MCF 10A (cell line): ENCODE measurements at regions of chr5 and their contacts with region 1.

Region 1: GRCh38 chr5:36870399-36871040 is 6.0 kb upstream of the NIPBL start:
- DNase-seq: peak; percentile 75
- H3K4me3 Mint-ChIP-seq: no peak overlapping the region
- H3K27ac Mint-ChIP-seq: no peak overlapping the region
- H3K4me1 Mint-ChIP-seq: peaks cover 20% of the 10 kb centered on the region
- H3K27me3 Mint-ChIP-seq: no peaks in the 10 kb centered on the region
- CTCF ChIP-seq: peak; percentile 65

Region 2: GRCh38 chr5:36734422-36734821 is 136.1 kb before region 1 on chr5:
- CTCF ChIA-PET with region 1: interaction called, 57 read pairs
- POLR2A ChIA-PET with region 1: interaction called, 5 read pairs
- intact Hi-C with region 1: no loop called
- DNase-seq: peak; percentile 57
- H3K4me3 Mint-ChIP-seq: no peak overlapping the region
- H3K27ac Mint-ChIP-seq: no peak overlapping the region
- H3K4me1 Mint-ChIP-seq: no peaks in the 10 kb centered on the region
- H3K27me3 Mint-ChIP-seq: peaks cover 19% of the 10 kb centered on the region
- CTCF ChIP-seq: peak; percentile 29

Region 3: DNA sequence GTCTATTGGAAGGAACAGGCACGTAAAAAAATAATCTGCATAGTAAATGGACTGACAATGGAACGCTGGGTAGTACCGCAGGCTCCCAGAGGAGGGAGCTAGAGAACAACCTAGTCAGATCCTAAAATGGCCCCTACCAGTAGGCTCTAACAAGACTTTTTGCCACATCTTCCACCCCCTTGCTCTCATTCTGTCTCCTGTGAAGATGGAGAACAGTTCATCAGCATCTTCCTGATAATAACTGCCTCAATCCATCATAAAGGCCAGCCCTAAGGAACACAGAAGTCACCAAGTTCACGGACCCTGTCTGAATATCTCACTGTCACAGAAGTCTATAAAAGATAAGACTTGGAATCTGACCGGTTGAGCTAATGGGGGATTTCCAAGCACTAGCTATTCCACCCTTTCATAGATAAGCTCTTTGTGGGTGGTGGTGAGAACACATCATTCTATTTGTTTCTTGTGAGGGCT is 130.7 kb before region 1 on chr5:
- CTCF ChIA-PET with region 1: interaction called, 48 read pairs
- POLR2A ChIA-PET with region 1: interaction called, 50 read pairs
- intact Hi-C with region 1: loop called (anchors 1 kb)
- DNase-seq: peak; percentile 77
- H3K4me3 Mint-ChIP-seq: no peak overlapping the region
- H3K27ac Mint-ChIP-seq: no peak overlapping the region
- H3K4me1 Mint-ChIP-seq: peaks cover 8% of the 10 kb centered on the region
- H3K27me3 Mint-ChIP-seq: peaks cover 15% of the 10 kb centered on the region
- CTCF ChIP-seq: peak; percentile 87

Region 4: DNA sequence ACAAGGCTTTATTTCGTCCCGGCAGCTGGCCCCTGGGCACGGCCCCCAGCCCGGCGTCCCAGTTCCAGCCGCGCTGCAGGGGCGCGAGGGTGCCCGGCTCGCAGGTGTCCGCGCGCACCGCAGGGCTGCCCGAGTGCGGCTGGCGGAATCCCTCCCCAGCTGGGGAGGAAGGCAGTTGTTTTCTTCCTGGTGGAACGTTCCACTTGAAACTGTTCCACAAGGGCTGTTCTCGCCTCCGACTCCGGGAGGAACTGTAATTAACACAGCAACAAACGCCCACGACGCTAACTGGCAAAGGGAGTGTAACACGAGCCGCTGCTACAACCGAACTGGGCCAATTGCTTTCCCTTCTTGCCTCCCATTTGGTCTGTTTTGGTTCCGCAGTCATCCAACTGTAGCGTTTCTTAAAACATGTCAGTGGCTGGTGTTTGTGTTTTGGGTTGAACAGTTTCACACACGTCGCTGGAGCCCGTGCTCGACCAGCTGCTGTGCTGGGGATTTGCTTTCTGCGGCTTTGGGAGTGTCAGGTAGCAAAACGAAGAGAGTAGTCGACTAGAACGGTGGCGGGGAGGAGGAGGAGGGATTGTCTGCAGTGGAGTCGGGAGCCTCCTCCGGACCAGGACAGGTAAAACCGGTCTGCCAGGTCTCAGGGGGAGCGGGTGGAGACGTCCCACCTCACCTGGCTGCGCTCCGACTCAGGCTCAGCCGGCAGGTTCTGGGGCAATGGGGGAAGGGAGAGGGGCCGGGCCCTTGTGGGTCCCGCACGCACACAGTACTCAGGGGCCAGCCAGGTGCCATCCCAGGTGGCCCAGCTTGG is 125.5 kb before region 1 on chr5:
- CTCF ChIA-PET with region 1: interaction called, 48 read pairs
- POLR2A ChIA-PET with region 1: interaction called, 50 read pairs
- intact Hi-C with region 1: loop called (anchors 1 kb)
- DNase-seq: peak; percentile 72
- H3K4me3 Mint-ChIP-seq: peak overlapping the region; percentile 85
- H3K27ac Mint-ChIP-seq: peak overlapping the region; percentile 32
- H3K4me1 Mint-ChIP-seq: peaks cover 17% of the 10 kb centered on the region
- H3K27me3 Mint-ChIP-seq: peaks cover 28% of the 10 kb centered on the region
- CTCF ChIP-seq: no peak

Region 5: GRCh38 chr5:37005946-37006540 is 135.5 kb after region 1 on chr5:
- CTCF ChIA-PET with region 1: interaction called, 4 read pairs
- POLR2A ChIA-PET with region 1: interaction called, 12 read pairs
- intact Hi-C with region 1: loop called (anchors 5 kb)
- DNase-seq: peak; percentile 23
- H3K4me3 Mint-ChIP-seq: no peak overlapping the region
- H3K27ac Mint-ChIP-seq: no peak overlapping the region
- H3K4me1 Mint-ChIP-seq: no peaks in the 10 kb centered on the region
- H3K27me3 Mint-ChIP-seq: no peaks in the 10 kb centered on the region
- CTCF ChIP-seq: peak; percentile 51